ENCODE measurements at regions of chr21 and their contacts with region 1.

Region 1: GRCh38 chr21:41170442-41170841 is 2.5 kb downstream of the BACE2 start:
- DNase-seq: no peak
- H3K4me3 ChIP-seq: no peak overlapping the region
- H3K27ac ChIP-seq: peak overlapping the region; percentile 94 to 97 (median 96)
- H3K4me1 ChIP-seq: peaks cover 22 to 64% (median 60%) of the 10 kb centered on the region in 4 donors
- H3K27me3 ChIP-seq: peaks cover 0 to 1% (median 0%) of the 10 kb centered on the region in 4 donors
- CTCF ChIP-seq: peak; percentile 45 to 59 (median 59)
- EP300 ChIP-seq: no peak
- POLR2A ChIP-seq: no peak

Region 2: GRCh38 chr21:41207401-41208068 is 37.1 kb after region 1 on chr21:
- intact Hi-C with region 1: loop called (anchors 5 kb)
- DNase-seq: no peak
- H3K4me3 ChIP-seq: peak overlapping the region; percentile 36 to 47 (median 42)
- H3K27ac ChIP-seq: peak overlapping the region; percentile 72 to 85 (median 76)
- H3K4me1 ChIP-seq: peaks cover 14 to 45% (median 38%) of the 10 kb centered on the region in 4 donors
- H3K27me3 ChIP-seq: no peaks in the 10 kb centered on the region
- CTCF ChIP-seq: no peak
- EP300 ChIP-seq: no peak
- POLR2A ChIP-seq: no peak

Measured in esophagus muscularis mucosa (tissue), 4 donors.